ENCODE measurements at regions of chr1 and their contacts with region 1.

Region 1: DNA sequence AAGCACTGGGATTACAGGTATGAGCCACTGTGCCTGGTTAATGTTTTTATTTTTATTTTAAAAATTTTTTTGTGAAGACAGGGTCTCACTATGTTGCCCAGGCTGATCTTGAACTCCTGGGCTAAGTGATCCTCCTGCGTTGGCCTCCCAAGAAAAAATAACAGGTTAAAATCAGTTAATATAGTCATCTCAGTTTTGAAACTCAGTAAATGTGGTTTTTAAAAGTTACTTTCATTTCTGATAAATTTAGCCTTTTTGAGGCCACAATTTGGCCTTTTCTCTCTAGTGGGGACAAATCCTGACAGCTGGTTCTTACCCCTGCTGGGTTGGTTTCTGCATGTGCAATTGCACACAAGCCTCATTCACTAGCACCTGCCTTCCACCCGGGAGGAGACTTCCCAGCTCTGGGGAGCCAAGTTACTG is 13.3 kb downstream of the PMF1 start:
- DNase-seq: no peak
- H3K4me3 Mint-ChIP-seq: no peak overlapping the region
- H3K27ac Mint-ChIP-seq: no peak overlapping the region
- H3K4me1 Mint-ChIP-seq: peaks cover 24% of the 10 kb centered on the region
- H3K27me3 Mint-ChIP-seq: no peaks in the 10 kb centered on the region
- CTCF ChIP-seq: no peak

Region 2: GRCh38 chr1:156096640-156097391 is 129.3 kb before region 1 on chr1:
- CTCF ChIA-PET with region 1: interaction called, 524 read pairs
- POLR2A ChIA-PET with region 1: interaction called, 4 read pairs
- intact Hi-C with region 1: no loop called
- DNase-seq: peak; percentile 89
- H3K4me3 Mint-ChIP-seq: no peak overlapping the region
- H3K27ac Mint-ChIP-seq: peak overlapping the region; percentile 82
- H3K4me1 Mint-ChIP-seq: peaks cover 35% of the 10 kb centered on the region
- H3K27me3 Mint-ChIP-seq: no peaks in the 10 kb centered on the region
- CTCF ChIP-seq: peak; percentile 99

Region 3: GRCh38 chr1:156146020-156146768 is 79.9 kb before region 1 on chr1:
- CTCF ChIA-PET with region 1: interaction called, 198 read pairs
- POLR2A ChIA-PET with region 1: interaction called, 20 read pairs
- intact Hi-C with region 1: loop called (anchors 1 kb)
- DNase-seq: peak; percentile 97
- H3K4me3 Mint-ChIP-seq: peak overlapping the region; percentile 24
- H3K27ac Mint-ChIP-seq: no peak overlapping the region
- H3K4me1 Mint-ChIP-seq: peaks cover 29% of the 10 kb centered on the region
- H3K27me3 Mint-ChIP-seq: no peaks in the 10 kb centered on the region
- CTCF ChIP-seq: peak; percentile 60

Region 4: GRCh38 chr1:156212833-156213643 is 13.1 kb before region 1 on chr1 and contains the start of gene PMF1:
- CTCF ChIA-PET with region 1: interaction called, 57 read pairs
- POLR2A ChIA-PET with region 1: interaction called, 52 read pairs
- intact Hi-C with region 1: no loop called
- DNase-seq: peak; percentile 99
- H3K4me3 Mint-ChIP-seq: peak within 1 kb of the TSS; percentile 97
- H3K27ac Mint-ChIP-seq: peak within 1 kb of the TSS; percentile 96
- H3K4me1 Mint-ChIP-seq: peaks cover 21% of the 10 kb centered on the region
- H3K27me3 Mint-ChIP-seq: no peaks in the 10 kb centered on the region
- CTCF ChIP-seq: no peak
- total RNA-seq, gene PMF1: 51.0 and 77.7 TPM in 2 replicates

Region 5: DNA sequence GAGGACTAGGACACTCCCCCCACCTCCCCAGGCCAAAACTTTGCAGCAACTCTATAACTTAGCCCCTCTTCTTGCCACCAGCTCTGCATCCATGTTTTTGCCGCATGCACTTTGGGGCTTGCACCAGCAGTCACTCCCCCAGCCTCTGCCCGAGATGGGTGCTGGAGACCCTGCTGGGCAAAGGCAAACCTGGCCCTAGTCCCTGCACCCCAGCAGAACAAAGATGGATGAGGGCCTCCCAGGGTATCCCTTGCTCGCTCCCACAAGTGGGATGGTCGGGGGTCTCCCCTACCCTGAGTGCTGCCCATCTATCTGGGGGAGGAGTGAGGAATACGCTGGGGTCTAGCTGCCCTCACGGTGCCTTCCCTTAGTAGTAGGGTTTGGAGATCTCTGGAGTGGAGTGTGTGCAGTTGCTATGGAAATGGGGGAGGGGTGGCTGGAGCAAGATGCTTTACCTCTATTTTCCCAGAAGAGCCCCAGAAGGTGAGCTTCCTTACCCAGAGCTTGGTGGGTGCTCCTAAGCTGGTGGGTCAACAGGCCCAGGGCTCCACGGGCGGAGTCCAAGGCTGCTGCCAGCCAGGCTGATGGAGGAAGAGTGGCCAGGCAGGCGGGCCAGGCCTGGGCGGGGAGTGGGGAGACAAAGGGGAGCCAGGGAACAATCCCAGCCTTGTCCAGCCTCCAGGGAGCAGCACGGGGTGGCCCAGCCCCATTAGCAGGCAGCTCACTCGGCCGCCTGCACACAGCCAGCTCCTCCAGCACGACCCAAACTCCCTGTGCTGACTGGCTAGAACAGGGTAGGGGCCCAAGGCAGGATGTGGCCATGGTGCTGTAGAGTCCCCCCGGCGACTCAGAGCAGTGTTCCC is 21.6 kb after region 1 on chr1 and contains the start of gene PAQR6:
- CTCF ChIA-PET with region 1: interaction called, 19 read pairs
- POLR2A ChIA-PET with region 1: interaction called, 3 read pairs
- intact Hi-C with region 1: no loop called
- DNase-seq: no peak
- H3K4me3 Mint-ChIP-seq: no peak within 1 kb of the TSS
- H3K27ac Mint-ChIP-seq: peak within 1 kb of the TSS; percentile 0
- H3K4me1 Mint-ChIP-seq: peaks cover 22% of the 10 kb centered on the region
- H3K27me3 Mint-ChIP-seq: no peaks in the 10 kb centered on the region
- CTCF ChIP-seq: no peak
- total RNA-seq, gene PAQR6: 21.5 and 29.2 TPM in 2 replicates

Region 6: DNA sequence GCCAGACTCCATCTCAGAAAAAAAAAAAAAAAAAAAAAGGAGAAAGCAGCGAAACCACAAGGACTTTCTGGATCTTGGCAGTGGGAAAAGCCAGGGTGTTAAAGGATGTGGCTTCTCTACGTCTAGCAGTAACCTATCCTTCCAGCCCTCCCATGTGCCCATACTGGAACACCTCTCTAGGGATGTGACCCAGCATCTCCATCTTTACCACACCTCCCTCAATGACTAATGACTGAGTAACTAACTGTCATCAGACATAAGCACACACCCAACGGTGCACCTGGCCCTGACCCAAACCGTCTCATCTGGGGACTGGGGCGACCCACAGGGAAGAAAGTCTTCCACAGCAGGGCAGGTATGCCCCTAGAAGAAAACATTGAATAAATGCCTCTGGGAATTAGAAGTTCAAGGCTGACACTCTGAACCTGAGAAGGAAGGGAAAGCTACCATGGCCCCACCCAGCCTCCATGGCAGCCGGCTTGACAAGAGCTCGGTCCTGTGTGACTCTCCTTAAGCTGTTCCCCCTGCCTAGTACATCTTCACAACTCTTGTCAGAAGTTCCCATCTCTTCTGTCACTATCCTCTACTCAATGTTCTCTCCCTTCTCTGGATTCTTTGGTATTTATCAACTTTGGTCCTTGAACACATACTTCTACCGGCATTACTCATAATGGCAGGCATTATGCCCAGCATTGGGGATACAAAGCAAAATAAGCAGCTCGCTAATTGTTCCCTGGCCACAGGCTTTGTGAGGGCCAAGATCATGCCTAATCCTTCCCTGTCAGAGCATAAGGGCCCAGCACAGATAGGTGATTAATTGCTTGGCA is 36.5 kb after region 1 on chr1:
- CTCF ChIA-PET with region 1: interaction called, 18 read pairs
- POLR2A ChIA-PET with region 1: interaction called, 3 read pairs
- intact Hi-C with region 1: no loop called
- DNase-seq: peak; percentile 90
- H3K4me3 Mint-ChIP-seq: peak overlapping the region; percentile 13
- H3K27ac Mint-ChIP-seq: peak overlapping the region; percentile 92
- H3K4me1 Mint-ChIP-seq: peaks cover 40% of the 10 kb centered on the region
- H3K27me3 Mint-ChIP-seq: no peaks in the 10 kb centered on the region
- CTCF ChIP-seq: no peak

Region 7: DNA sequence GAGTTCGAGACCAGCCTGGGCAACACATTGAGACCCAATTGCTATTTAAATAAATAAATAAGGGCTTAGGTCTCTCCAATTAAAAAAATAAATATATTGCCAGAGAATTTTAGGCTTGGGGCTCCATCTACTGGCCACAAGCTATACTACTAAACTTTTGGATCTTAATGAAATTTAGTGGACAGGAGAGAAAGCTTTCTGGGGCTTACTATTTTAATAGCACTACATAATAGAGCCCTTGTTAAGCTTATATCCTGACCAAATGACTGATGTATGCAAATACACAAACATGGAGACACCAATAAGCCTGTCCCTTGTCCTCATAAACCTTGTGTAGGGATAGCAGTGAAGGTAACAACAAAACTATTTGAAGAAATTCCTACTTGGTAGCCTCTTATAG is 93.5 kb after region 1 on chr1:
- CTCF ChIA-PET with region 1: interaction called, 10 read pairs
- POLR2A ChIA-PET with region 1: interaction called, 3 read pairs
- intact Hi-C with region 1: no loop called
- DNase-seq: peak; percentile 51
- H3K4me3 Mint-ChIP-seq: no peak overlapping the region
- H3K27ac Mint-ChIP-seq: no peak overlapping the region
- H3K4me1 Mint-ChIP-seq: peaks cover 5% of the 10 kb centered on the region
- H3K27me3 Mint-ChIP-seq: no peaks in the 10 kb centered on the region
- CTCF ChIP-seq: peak; percentile 58

Region 8: DNA sequence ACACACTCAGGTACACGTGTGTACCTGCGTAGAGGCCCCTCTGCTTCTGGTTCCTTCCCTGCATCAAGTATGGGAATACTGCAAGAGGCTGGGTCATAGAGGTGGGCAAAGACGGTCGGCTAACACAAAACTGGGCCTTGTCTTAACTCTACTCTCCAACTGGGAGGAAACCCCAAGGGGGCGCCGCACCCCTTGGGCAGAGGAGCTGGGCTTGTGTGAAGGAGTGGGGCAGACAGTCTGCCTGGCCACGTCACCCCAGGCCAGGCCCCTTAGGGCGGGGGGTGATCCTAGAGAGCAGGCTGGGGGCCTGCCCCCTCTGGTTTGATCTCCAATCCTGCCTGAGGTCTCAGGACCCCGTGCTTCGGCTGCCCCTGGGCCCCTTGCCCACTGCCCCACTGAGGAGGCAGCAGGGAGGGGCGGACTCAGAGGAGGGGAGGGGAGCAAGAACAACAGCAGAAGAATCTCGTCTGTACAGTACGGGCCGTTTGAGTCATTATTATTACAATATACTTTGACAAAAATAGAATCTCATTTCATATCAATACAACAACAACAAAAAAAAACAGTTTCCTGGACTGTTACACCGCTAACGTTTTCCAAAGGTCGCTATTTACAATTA is 239.7 kb after region 1 on chr1:
- CTCF ChIA-PET with region 1: no interaction called
- POLR2A ChIA-PET with region 1: no interaction called
- intact Hi-C with region 1: no loop called
- DNase-seq: peak; percentile 57
- H3K4me3 Mint-ChIP-seq: peak overlapping the region; percentile 59
- H3K27ac Mint-ChIP-seq: peak overlapping the region; percentile 82
- H3K4me1 Mint-ChIP-seq: peaks cover 58% of the 10 kb centered on the region
- H3K27me3 Mint-ChIP-seq: no peaks in the 10 kb centered on the region
- CTCF ChIP-seq: peak; percentile 31